ENCODE measurements at regions of chr10 and their contacts with region 1.

Region 1: DNA sequence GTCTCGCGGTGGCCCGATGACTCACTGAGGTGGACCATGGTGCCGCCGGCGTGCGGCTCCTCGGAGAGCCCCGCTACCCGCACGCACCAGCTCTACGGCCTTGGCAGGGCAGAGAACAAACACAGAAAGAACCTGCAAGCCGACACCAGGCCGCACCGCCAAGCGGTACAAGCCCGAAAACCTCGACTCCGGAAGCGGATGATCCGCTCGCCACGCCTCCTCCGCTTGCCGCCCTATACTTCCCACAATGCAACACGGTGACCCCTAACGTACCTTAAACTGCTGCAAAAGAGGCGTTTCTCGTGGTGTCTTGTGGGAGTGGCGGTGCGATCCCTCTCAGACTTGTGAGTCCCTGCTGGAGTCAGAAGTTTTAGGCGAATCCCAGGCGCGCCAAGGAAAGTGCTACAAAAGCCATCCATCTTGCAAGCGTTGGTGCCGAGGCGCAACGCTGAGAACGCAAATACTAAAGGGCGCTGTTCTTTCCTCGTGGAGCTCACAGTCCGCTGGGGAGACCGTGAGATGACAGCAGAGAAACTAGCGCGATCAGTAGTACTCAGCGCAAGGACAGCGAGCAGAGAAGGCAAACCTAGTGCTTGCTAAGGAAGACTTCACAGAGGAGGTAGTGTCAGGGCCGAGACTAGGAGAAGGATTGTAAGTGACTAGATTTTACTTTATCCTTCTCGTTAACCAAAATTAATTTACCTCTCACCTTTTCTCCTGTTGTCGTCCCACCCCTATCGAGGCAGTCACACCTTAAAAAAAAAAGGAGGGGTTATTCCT is at the start of gene MRPS16:
- DNase-seq: peak; percentile 89

Region 2: DNA sequence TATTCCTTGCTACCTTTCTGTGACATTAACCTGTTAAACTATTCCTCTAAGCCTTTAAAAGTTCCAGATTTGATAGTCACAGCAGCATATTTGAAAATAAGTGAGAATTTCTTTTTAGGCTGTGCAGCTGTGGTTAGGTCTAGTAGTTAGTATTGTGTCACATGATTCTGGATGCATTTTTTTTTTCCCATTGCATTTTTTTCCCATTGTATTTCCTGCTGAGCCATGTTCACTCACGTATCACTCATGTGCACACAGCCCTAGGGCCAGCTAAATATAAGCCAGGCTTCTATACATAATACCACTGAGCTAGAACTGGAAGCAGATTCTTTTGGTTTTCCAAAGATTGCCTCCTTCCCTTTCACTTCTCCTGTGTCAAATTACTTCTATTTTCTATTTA is 42.9 kb before region 1 on chr10:
- CTCF ChIA-PET with region 1: no interaction called
- POLR2A ChIA-PET with region 1: no interaction called
- DNase-seq: no peak

Region 3: DNA sequence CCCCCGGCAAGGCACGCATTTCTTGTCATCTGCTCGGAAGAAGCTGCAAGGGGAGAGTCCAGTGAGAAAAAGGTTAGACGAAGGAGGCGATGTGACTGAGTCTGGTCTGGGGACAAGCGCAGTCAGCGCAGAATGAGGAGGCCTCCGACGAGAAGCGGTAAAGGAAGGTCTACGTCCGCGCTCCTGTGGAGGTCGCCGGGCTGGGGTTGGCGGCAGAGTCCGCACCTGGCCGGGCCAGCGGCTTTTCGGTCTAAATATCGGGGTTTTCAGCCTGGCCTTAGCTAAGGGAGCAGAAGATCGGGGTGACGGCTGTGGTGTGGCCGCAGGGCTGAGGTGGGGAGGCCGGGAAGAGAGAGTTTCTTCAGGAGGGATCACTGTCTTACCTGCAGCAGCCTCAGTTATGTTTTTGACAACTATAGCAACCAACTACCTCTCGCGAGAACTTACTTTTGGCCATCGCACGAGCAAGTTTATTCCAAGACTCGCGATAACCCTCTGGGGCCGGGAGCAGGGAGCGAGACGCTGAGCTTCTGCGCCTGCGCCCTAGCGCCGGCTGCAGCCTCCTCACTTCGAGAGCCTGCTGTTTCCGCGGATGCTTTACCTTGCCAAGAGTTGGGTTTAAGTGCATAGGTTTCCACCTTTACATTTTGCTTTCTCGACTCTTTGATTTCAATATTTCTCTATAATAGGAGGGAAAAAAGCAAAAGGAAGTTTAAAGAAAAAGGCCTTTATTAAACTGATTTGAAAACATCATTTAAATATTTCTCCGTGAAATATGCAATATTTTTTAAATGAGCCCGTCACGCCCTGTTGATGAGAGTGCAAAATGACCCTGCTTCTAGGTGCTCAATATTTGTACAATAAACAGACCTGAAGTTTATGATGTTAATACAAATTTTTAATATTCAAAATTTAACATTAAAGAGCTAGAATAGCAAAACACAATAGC is 106.0 kb after region 1 on chr10 and contains the start of gene CFAP70:
- CTCF ChIA-PET with region 1: no interaction called
- POLR2A ChIA-PET with region 1: interaction called, 16 read pairs
- DNase-seq: peak; percentile 98

Measured in HEK293T (cell line).